AG04449 (cell line): ENCODE measurements at regions of chr1 and their contacts with region 1.

Region 1: GRCh38 chr1:63917571-63918417 is 144.0 kb downstream of the ROR1 start:
- DNase-seq: no peak
- H3K4me3 ChIP-seq: no peak overlapping the region
- CTCF ChIP-seq: no peak

Region 2: DNA sequence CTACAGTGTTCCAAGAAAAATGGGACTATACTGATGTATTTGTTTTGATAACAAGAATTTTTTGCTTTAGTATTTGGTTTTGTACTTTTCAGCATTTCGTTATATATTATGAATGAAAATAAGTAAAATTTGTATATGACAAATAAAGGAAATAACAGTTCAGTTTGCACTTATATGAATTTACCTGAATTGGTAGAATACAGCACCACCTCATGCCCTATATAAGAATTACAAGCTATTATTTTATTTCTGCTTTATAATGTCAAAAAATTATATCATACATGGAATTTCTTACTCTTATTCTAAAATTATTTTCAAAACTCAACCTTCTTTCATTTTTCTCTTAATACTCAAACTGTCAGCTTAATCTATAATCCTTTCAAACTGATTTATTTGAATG is 379.9 kb before region 1 on chr1:
- CTCF ChIA-PET with region 1: no interaction called
- POLR2A ChIA-PET with region 1: no interaction called
- DNase-seq: no peak
- H3K4me3 ChIP-seq: no peak overlapping the region
- CTCF ChIP-seq: peak; percentile 16

Region 3: GRCh38 chr1:63615768-63616420 is 301.9 kb before region 1 on chr1:
- CTCF ChIA-PET with region 1: interaction called, 18 read pairs
- POLR2A ChIA-PET with region 1: no interaction called
- DNase-seq: no peak
- H3K4me3 ChIP-seq: no peak overlapping the region
- CTCF ChIP-seq: peak; percentile 40

Region 4: DNA sequence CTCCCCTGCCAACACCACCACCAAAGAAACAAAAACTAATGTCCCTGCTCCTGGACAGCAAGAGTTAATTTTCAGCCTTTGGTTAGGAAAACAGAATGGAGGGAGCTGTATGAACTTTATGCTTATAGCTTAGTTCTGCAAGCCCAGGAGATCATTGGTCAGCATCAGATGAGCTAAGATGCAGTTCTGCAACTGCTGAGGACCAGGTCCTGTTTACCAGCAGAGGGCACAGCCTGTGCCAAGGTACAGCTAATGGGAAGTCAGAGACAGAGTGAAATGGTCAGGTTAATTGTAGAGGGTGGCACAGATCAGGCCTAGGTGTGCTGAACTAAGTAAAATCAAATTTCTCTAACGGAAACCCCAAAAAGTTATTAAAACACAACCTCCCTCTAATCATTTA is 17.3 kb after region 1 on chr1:
- CTCF ChIA-PET with region 1: interaction called, 43 read pairs
- POLR2A ChIA-PET with region 1: no interaction called
- DNase-seq: no peak
- H3K4me3 ChIP-seq: no peak overlapping the region
- CTCF ChIP-seq: peak; percentile 30

Region 5: DNA sequence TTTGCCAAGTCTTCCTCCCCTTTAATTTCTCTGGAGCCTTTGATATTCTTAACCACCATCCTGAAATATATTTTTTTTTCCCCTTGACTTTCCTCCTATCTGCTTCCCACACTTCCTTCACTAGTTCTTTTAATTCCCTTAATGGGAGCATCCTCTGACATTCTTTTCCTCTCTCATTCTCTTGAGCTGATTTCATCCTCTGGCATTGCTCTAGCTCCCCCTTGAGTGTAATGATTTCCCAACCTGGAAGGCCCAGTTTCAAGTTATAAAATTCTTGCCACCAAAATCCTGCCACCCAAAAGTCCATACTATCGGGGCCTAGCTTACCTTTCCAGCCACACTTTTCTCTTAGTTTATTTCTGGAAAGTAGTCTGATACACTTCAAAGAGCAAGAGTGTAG is 246.2 kb after region 1 on chr1:
- CTCF ChIA-PET with region 1: interaction called, 20 read pairs
- POLR2A ChIA-PET with region 1: no interaction called
- DNase-seq: no peak
- H3K4me3 ChIP-seq: no peak overlapping the region
- CTCF ChIP-seq: peak; percentile 58